CD4-positive, alpha-beta T cell (primary cell): ENCODE measurements at regions of chr10 and their contacts with region 1.

Region 1: DNA sequence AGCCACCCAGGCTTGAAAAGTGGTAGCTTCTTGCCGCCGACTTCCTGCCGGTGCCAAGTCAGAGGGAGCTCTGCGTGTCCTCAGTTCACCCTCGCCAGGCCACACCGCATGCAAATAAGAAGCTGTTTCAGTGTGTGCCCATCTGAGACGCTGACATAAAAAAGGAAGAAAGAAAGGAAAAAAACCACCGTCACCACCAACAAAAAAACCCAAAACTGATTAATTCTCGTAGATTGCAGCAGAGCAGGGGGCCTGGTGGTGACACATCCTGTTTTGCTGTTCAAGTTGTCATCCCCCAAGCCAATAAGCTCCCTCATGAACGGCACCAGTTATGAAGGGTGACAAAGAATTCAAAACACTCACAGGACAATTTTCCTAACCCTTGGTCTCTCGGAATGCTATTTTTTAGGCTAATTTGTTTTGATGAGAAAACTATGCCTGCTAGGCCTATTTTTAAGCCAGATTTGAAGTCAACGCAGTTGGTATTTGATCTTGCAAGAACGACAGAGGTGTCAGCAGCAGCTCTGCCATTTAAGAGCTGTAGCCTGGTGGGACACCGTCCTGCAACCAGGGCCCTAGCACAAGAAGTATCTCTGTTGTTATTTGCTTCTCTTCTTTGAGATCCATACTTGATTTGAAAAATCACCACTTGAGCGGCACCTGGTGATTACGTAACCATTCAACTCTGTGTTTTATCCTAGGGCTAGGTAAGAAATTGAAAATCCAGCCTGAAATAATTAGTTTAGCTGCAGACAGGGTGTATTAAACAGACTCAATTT is 145.6 kb downstream of the PFKFB3 start:
- DNase-seq: peak; percentile 67 to 96 (median 80)
- ATAC-seq: peak; percentile 89
- H3K4me3 ChIP-seq: peak overlapping the region; percentile 30
- H3K4me3 Mint-ChIP-seq: peak overlapping the region; percentile 72
- H3K27ac ChIP-seq: peak overlapping the region; percentile 58 to 80
- H3K27ac Mint-ChIP-seq: peak overlapping the region; percentile 92
- H3K4me1 ChIP-seq: peaks cover 28% of the 10 kb centered on the region
- H3K4me1 Mint-ChIP-seq: peaks cover 59% of the 10 kb centered on the region
- H3K27me3 ChIP-seq: no peaks in the 10 kb centered on the region
- H3K27me3 Mint-ChIP-seq: no peaks in the 10 kb centered on the region
- CTCF ChIP-seq: no peak

Region 2: GRCh38 chr10:6163364-6164270 is 184.7 kb before region 1 on chr10:
- CTCF ChIA-PET with region 1: no interaction called
- POLR2A ChIA-PET with region 1: interaction called, 21 read pairs
- intact Hi-C with region 1: no loop called
- DNase-seq: peak; percentile 83 to 97 (median 92)
- ATAC-seq: peak; percentile 86
- H3K4me3 ChIP-seq: peak overlapping the region; percentile 71
- H3K4me3 Mint-ChIP-seq: peak overlapping the region; percentile 90
- H3K27ac ChIP-seq: peak overlapping the region; percentile 91 to 93
- H3K27ac Mint-ChIP-seq: peak overlapping the region; percentile 94
- H3K4me1 ChIP-seq: peaks cover 42% of the 10 kb centered on the region
- H3K4me1 Mint-ChIP-seq: peaks cover 47% of the 10 kb centered on the region
- H3K27me3 ChIP-seq: no peaks in the 10 kb centered on the region
- H3K27me3 Mint-ChIP-seq: no peaks in the 10 kb centered on the region
- CTCF ChIP-seq: no peak

Region 3: GRCh38 chr10:6202684-6203330 is 145.5 kb before region 1 on chr10 and contains the start of gene PFKFB3:
- CTCF ChIA-PET with region 1: interaction called, 20 read pairs
- POLR2A ChIA-PET with region 1: interaction called, 74 read pairs
- intact Hi-C with region 1: loop called (anchors 1 to 10 kb)
- DNase-seq: peak; percentile 79 to 95 (median 91)
- ATAC-seq: peak; percentile 54
- H3K4me3 ChIP-seq: peak within 1 kb of the TSS; percentile 67
- H3K4me3 Mint-ChIP-seq: peak within 1 kb of the TSS; percentile 99
- H3K27ac ChIP-seq: peak within 1 kb of the TSS; percentile 22 to 56
- H3K27ac Mint-ChIP-seq: peak within 1 kb of the TSS; percentile 94
- H3K4me1 ChIP-seq: peaks cover 39% of the 10 kb centered on the region
- H3K4me1 Mint-ChIP-seq: peaks cover 42% of the 10 kb centered on the region
- H3K27me3 ChIP-seq: no peaks in the 10 kb centered on the region
- H3K27me3 Mint-ChIP-seq: no peaks in the 10 kb centered on the region
- CTCF ChIP-seq: peak; percentile 94
- total RNA-seq, gene PFKFB3: 142 to 145 TPM

Region 4: GRCh38 chr10:6300106-6300783 is 48.0 kb before region 1 on chr10:
- CTCF ChIA-PET with region 1: no interaction called
- POLR2A ChIA-PET with region 1: interaction called, 17 read pairs
- intact Hi-C with region 1: loop called (anchors 1 to 10 kb)
- DNase-seq: peak in 13 of 14 experiments; percentile 7 to 77 (median 36)
- ATAC-seq: peak; percentile 83
- H3K4me3 ChIP-seq: no peak overlapping the region
- H3K4me3 Mint-ChIP-seq: peak overlapping the region; percentile 28
- H3K27ac ChIP-seq: peak overlapping the region; percentile 17 to 27
- H3K27ac Mint-ChIP-seq: peak overlapping the region; percentile 75
- H3K4me1 ChIP-seq: peaks cover 23% of the 10 kb centered on the region
- H3K4me1 Mint-ChIP-seq: peaks cover 33% of the 10 kb centered on the region
- H3K27me3 ChIP-seq: no peaks in the 10 kb centered on the region
- H3K27me3 Mint-ChIP-seq: no peaks in the 10 kb centered on the region
- CTCF ChIP-seq: no peak

Region 5: GRCh38 chr10:6364893-6365292 is 16.6 kb after region 1 on chr10:
- CTCF ChIA-PET with region 1: interaction called, 4 read pairs
- POLR2A ChIA-PET with region 1: interaction called, 19 read pairs
- intact Hi-C with region 1: no loop called
- DNase-seq: no peak
- ATAC-seq: no peak
- H3K4me3 ChIP-seq: no peak overlapping the region
- H3K4me3 Mint-ChIP-seq: no peak overlapping the region
- H3K27ac ChIP-seq: no peak overlapping the region
- H3K27ac Mint-ChIP-seq: no peak overlapping the region
- H3K4me1 ChIP-seq: no peaks in the 10 kb centered on the region
- H3K4me1 Mint-ChIP-seq: no peaks in the 10 kb centered on the region
- H3K27me3 ChIP-seq: no peaks in the 10 kb centered on the region
- H3K27me3 Mint-ChIP-seq: no peaks in the 10 kb centered on the region
- CTCF ChIP-seq: no peak

Region 6: GRCh38 chr10:6401562-6402348 is 53.5 kb after region 1 on chr10:
- CTCF ChIA-PET with region 1: interaction called, 36 read pairs
- POLR2A ChIA-PET with region 1: interaction called, 52 read pairs
- intact Hi-C with region 1: loop called (anchors 1 to 2 kb)
- DNase-seq: peak; percentile 35 to 84 (median 49)
- ATAC-seq: peak; percentile 88
- H3K4me3 ChIP-seq: no peak overlapping the region
- H3K4me3 Mint-ChIP-seq: peak overlapping the region; percentile 30
- H3K27ac ChIP-seq: no peak overlapping the region
- H3K27ac Mint-ChIP-seq: peak overlapping the region; percentile 0
- H3K4me1 ChIP-seq: peaks cover 11% of the 10 kb centered on the region
- H3K4me1 Mint-ChIP-seq: peaks cover 29% of the 10 kb centered on the region
- H3K27me3 ChIP-seq: no peaks in the 10 kb centered on the region
- H3K27me3 Mint-ChIP-seq: no peaks in the 10 kb centered on the region
- CTCF ChIP-seq: peak; percentile 83

Region 7: DNA sequence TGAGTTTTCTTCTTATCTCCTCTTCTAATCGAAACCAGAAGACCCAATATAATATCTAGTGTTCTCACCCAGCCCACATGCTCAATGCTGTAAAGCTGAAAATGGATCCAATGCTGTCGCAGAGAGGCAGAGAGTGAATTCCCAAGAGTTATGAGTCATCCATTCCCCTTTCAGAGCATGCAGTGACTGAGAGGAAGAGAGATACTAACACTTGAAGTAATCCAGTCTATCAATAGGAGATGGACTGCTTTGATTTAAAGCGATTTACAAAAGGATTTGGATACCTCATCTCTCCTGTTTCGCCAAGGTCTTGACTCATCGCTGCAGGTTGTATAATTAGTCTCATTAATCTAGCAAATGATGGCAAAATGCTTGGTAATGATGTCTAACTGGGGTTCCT is 273.3 kb after region 1 on chr10:
- CTCF ChIA-PET with region 1: no interaction called
- POLR2A ChIA-PET with region 1: no interaction called
- intact Hi-C with region 1: no loop called
- DNase-seq: no peak
- ATAC-seq: no peak
- H3K4me3 ChIP-seq: no peak overlapping the region
- H3K4me3 Mint-ChIP-seq: no peak overlapping the region
- H3K27ac ChIP-seq: no peak overlapping the region
- H3K27ac Mint-ChIP-seq: no peak overlapping the region
- H3K4me1 ChIP-seq: no peaks in the 10 kb centered on the region
- H3K4me1 Mint-ChIP-seq: peaks cover 14% of the 10 kb centered on the region
- H3K27me3 ChIP-seq: no peaks in the 10 kb centered on the region
- H3K27me3 Mint-ChIP-seq: no peaks in the 10 kb centered on the region
- CTCF ChIP-seq: no peak